PC-9 (cell line): ENCODE measurements at regions of chr2 and their contacts with region 1.

Region 1: DNA sequence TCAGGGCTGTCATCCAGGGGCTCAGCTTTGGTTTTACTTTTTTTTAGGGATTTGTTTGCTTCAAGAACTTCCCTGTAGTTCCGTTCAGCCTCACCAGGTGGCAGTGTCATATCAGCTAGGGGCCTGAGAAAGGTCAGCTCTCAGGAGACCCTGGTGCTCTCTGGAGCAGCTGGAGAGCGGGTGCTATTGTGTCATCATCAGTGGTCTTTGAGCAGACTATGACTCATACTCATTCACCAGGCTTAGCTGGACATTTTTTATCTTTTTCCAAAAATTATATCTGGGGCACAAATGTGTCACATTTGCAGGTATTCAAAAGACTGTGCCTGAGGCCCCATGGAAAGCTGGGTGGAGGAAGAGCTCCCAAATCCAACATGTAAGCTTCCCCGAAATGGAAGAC is 24.4 kb downstream of the ZNF892 start:
- DNase-seq: peak; percentile 73 to 80
- H3K4me3 ChIP-seq: no peak overlapping the region
- H3K27ac ChIP-seq: no peak overlapping the region
- H3K4me1 ChIP-seq: peaks cover 13% of the 10 kb centered on the region
- H3K27me3 ChIP-seq: no peaks in the 10 kb centered on the region; the same call in 1 of the 2 replicates
- CTCF ChIP-seq: peak; percentile 100

Region 2: DNA sequence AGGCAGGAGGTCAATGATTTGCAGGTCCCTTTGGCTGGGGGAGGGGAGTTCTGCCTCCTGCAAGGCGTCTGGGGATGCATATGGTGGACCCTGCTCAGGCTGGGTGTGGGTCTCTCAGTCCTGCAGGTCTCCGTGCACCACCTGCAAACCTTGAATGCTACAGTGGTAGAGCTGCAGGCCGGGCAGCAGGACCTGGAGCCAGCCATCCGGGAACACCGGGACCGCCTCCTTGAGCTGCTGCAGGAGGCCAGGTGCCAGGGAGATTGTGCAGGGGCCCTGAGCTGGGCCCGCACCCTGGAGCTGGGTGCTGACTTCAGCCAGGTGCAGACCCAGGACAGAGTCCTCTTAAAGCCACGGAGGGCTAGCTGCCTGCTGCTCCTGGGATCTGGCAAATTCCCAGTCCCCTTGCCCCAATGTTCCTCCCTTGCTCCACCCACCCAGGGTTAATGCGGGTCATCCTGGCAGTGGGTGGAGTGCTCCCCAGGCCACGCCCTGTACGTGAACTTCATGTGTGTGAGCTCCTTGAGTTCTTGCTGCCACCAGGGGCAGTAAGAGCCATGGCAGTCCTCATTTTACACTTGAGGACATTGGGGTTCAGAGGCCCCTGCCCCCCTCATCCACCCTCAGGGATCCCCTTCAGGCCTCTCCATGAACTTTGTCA is 45.7 kb after region 1 on chr2:
- CTCF ChIA-PET with region 1: interaction called, 26 read pairs
- POLR2A ChIA-PET with region 1: interaction called, 3 read pairs
- intact Hi-C with region 1: loop called (anchors 1 kb)
- DNase-seq: peak; percentile 80 to 90
- H3K4me3 ChIP-seq: peak overlapping the region; percentile 73
- H3K27ac ChIP-seq: peak overlapping the region; percentile 65
- H3K4me1 ChIP-seq: peaks cover 39% of the 10 kb centered on the region
- H3K27me3 ChIP-seq: no peaks in the 10 kb centered on the region
- CTCF ChIP-seq: peak; percentile 76

Region 3: DNA sequence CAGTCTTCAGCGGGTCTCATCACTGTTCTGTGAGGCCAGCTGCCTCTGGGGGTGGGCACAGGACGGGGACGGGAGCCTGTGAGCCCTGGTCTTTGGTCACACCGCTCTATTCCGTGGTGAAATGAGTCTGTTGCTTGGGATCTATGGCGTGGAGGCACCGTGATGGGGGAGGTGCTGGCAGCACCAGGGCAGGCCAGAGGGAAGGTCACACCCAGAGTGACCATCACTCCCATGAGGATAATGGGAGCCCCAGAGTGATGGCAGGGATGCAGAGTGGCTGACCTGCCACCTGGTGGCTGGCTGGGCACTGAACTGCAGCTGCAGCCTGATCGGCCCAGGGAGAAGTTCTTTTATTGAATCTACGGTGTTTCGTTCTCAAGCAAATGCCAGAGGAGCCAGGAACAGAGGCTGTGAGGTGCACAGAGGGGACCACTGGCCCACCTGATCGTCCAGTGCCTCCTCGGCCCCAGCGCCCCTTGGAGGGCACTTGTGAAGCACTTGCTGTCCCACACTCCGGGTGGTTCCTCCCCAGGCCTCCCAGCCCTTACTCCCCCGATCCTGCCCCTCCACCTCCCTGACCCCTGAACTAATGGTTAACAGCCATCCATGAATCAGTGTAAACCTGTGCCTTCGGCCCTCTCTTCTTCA is 83.4 kb after region 1 on chr2:
- CTCF ChIA-PET with region 1: interaction called, 14 read pairs
- POLR2A ChIA-PET with region 1: interaction called, 4 read pairs
- intact Hi-C with region 1: loop called (anchors 1 kb)
- DNase-seq: peak; percentile 70
- H3K4me3 ChIP-seq: no peak overlapping the region
- H3K27ac ChIP-seq: peak overlapping the region; percentile 88
- H3K4me1 ChIP-seq: peaks cover 78% of the 10 kb centered on the region
- H3K27me3 ChIP-seq: no peaks in the 10 kb centered on the region
- CTCF ChIP-seq: peak; percentile 94

Region 4: DNA sequence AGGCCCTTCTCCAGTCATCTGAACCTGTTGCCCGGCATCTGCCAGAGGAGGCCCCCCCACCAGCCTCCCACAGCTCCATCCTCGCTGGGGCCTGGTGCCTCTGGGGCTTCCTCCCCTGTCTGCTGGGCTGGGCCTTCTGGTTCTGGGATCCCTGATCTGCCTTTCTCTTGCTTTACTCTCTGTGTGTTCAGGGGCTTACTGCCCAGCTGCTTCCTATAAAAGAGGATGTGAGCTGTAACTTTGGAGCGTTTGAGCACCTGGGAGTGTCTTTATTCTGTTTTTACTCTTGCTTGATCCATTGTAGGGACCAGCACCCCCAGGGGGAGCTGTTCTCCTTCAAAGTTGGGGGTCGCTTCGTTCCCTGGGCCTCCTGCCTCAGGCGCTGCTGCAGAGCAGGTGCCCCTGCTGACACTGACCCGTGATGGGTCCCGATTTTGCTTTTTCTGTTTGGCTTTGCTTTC is 147.7 kb after region 1 on chr2:
- CTCF ChIA-PET with region 1: no interaction called
- POLR2A ChIA-PET with region 1: no interaction called
- intact Hi-C with region 1: no loop called
- DNase-seq: no peak
- H3K4me3 ChIP-seq: no peak overlapping the region
- H3K27ac ChIP-seq: no peak overlapping the region
- H3K4me1 ChIP-seq: no peaks in the 10 kb centered on the region
- H3K27me3 ChIP-seq: peaks cover 88% of the 10 kb centered on the region
- CTCF ChIP-seq: peak; percentile 39; the same call in 1 of the 2 replicates

Region 5: GRCh38 chr2:95402370-95403203 is 170.9 kb after region 1 on chr2 and contains the start of gene FAHD2A:
- CTCF ChIA-PET with region 1: no interaction called
- POLR2A ChIA-PET with region 1: no interaction called
- intact Hi-C with region 1: loop called (anchors 5 kb)
- DNase-seq: peak; percentile 85 to 94
- H3K4me3 ChIP-seq: peak within 1 kb of the TSS; percentile 92
- H3K27ac ChIP-seq: no peak within 1 kb of the TSS
- H3K4me1 ChIP-seq: peaks cover 17% of the 10 kb centered on the region
- H3K27me3 ChIP-seq: no peaks in the 10 kb centered on the region
- CTCF ChIP-seq: no peak
- total RNA-seq, gene FAHD2A: 23.0 and 28.7 TPM in 2 replicates